Motor neuron (in vitro differentiated cells): ENCODE measurements at regions of chr11 and their contacts with region 1.

Region 1: GRCh38 chr11:12963792-12964536 is 45.2 kb upstream of the RASSF10 start:
- ATAC-seq: peak; percentile 78 to 99 (median 90)
- H3K4me3 ChIP-seq: no peak overlapping the region
- H3K27ac ChIP-seq: no peak overlapping the region
- H3K4me1 ChIP-seq: peaks cover 3 to 6% of the 10 kb centered on the region in 2 donors

Region 2: DNA sequence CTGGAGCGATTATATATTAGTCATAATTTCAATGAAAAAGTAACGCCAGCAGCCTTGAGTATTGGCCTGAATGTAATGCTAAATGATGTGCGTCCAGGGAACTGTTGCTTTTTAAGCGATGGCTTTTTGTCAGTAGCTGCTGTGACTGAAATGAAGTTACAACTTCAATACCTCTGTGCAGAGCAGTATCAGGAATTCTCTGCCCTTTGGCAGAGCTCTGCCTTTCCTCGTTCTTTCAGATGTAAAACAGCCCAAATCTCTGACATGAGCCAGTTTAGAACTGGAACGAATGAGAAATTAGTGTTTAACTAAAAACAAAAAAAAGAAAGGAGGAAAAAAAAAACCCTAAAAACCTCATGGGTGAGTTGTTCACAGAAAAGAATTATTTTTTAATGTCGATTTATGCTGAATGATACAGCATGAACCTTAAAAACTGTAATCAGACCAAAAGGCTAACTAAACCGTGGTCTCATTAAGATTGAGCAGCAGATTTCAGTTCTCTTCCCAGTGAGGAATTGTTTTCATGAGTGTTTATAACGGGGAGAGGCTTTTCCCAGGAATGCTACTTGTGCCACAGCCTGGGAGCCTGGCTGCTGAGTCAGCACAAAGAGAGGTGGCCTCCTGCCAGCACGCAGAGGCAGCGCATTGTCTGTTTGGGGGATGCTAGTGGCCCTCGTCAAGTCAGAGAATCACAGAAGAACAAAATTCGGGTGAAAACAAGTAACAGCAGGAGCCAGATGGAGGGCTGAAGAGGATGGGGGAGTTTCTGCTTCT is 101.1 kb before region 1 on chr11:
- in situ Hi-C with region 1: no loop called
- ATAC-seq: peak; percentile 54 to 83 (median 71)
- H3K4me3 ChIP-seq: peak overlapping the region in 1 of 5 donors; percentile 7
- H3K27ac ChIP-seq: peak overlapping the region in 1 of 2 donors; percentile 11
- H3K4me1 ChIP-seq: peaks cover 40 to 41% of the 10 kb centered on the region in 2 donors

Region 3: DNA sequence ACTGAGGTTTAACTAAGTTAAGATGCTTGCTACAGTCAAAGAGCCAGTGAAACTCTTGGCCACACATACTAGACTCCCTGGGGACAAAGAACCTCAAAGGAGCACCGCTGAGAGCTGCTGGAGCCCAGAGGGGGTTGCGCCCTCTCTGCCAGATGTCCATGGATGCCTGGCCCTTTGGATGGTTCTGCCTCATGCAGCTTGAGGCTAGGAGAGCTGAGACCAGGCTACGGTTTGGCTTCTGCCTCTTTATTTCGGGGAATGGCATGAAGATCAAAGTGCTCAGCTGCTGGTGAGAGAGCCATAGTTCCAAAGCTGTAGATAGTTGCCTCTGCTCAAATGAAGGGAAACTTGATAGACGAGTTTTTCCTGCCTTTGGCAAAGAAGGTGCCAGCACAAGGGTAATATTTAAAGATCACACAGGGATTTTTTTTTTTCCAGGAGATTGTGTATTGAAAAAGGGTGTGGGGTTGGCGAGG is 88.2 kb after region 1 on chr11:
- in situ Hi-C with region 1: no loop called
- ATAC-seq: no peak
- H3K4me3 ChIP-seq: no peak overlapping the region
- H3K27ac ChIP-seq: no peak overlapping the region
- H3K4me1 ChIP-seq: no peaks in the 10 kb centered on the region

Region 4: GRCh38 chr11:13152736-13153533 is 189.0 kb after region 1 on chr11:
- in situ Hi-C with region 1: loop called in 2 of 9 experiments (anchors 10 to 25 kb)
- ATAC-seq: no peak
- H3K4me3 ChIP-seq: no peak overlapping the region
- H3K27ac ChIP-seq: no peak overlapping the region
- H3K4me1 ChIP-seq: no peaks in the 10 kb centered on the region

Region 5: GRCh38 chr11:13169709-13170108 is 205.7 kb after region 1 on chr11:
- in situ Hi-C with region 1: loop called in 2 of 9 experiments (anchors 10 to 25 kb)
- ATAC-seq: peak in 2 of 8 experiments; percentile 66 to 77
- H3K4me3 ChIP-seq: no peak overlapping the region
- H3K27ac ChIP-seq: no peak overlapping the region
- H3K4me1 ChIP-seq: peaks cover 0 to 6% of the 10 kb centered on the region in 2 donors

Region 6: DNA sequence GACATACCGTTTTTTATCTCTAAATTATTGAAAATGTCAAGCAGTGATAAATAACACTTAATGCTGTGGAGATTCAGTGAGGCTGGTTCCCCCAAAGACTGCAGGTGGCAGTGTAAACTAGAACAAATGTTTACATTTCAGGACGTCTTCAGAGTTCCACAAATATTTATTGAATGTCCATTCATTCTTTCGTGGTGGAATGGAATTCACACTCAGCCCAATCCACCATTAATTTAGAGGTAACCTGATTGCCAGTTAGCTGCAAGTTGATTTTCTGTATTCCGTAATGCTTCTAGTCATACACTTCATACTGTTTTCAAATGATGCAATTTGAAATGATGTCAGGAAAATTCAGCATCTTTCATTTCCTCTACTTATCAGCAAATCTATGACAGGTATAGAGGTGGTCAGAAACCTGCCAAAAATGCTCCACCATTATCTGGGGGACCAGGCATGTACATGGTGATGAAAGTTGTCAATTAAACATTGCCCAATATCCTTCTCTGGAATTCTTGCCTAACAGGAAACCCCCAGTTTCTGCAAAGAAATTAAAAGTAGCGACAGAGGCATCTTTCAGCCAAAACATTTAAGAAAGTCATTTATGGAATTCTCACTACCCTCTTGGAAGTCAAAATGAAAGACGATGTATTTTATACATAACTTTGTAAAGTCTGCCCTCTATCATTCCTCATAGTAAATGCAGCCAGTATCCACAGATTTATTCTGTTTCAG is 219.3 kb after region 1 on chr11:
- in situ Hi-C with region 1: loop called in 2 of 9 experiments (anchors 10 to 25 kb)
- ATAC-seq: peak in 4 of 8 experiments; percentile 63 to 79 (median 68)
- H3K4me3 ChIP-seq: no peak overlapping the region
- H3K27ac ChIP-seq: no peak overlapping the region
- H3K4me1 ChIP-seq: peaks cover 0 to 2% of the 10 kb centered on the region in 2 donors

Region 7: DNA sequence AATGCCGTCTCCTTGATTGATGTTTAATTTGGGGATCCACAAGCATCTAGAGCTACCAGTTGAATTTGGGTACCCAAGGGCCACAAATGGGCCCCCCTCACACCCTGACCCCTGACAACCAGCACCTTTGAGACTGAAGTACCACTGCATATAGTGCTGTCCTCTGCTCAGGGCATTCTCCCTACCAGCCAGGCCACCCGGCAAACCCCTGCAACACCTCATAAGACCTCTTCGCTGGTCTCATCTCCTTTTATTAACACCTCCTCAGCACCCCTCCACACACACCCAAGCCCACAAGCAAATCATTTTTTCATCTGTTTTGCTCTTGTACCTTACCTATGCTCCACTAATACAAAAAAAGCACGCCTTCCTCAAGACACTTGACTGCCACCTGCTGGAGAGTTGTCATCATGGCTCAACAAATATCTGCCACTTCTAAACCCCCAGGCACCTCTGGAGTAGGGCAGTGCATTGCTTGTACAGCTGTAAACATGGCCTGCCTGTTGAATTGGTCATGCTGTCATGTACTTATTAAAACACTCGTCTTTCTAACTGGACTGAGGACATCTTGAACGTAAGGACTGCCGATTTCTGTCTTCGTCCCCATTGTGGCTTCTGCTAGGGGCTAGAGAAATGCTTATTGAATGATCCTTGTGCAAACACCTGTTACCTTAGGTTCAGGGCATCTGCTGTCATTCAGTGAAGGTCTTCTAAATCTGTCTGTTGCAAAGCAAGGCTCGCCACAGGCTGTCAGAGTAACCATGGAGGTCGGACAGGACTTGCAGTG is 380.2 kb after region 1 on chr11:
- in situ Hi-C with region 1: loop called in 5 of 9 experiments (anchors 25 kb)
- ATAC-seq: peak in 7 of 8 experiments; percentile 32 to 89 (median 62)
- H3K4me3 ChIP-seq: no peak overlapping the region
- H3K27ac ChIP-seq: no peak overlapping the region
- H3K4me1 ChIP-seq: no peaks in the 10 kb centered on the region